ENCODE measurements at regions of chr6 and their contacts with region 1.

Region 1: DNA sequence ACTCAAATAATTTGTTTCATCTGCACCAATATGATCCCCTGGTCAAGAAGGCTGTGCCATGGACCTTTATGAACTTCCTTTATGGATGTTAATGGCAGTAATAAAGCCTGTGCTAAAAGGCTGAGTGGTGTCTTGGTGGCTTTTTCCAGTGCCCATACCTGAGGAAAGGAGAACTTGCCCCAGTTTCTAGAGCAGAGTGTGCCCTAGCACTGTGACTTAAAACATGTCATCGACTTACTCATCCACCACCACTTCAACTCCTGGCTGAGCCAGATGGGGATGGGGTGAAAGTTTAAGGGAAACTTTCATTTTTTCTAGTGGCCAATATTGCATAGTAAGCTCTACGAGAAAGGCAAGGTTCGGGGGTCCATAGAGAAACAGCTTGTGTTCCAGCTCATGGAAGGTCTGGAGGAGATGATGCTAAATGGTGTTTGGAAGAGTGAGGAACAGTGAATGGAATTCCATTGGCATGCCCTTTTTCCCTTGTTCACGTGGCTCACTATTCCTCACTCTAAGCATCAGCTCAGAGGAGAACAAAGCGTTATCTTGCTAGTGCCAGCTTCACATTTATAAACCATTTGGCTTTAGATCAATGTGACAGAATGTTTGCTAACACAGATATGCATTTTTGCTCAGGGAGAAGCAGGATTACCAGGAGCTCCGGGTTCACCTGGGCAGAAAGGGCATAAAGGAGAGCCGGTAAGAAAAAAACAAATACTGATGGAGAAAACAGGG is 71.2 kb downstream of the COL19A1 start:
- DNase-seq: no peak
- H3K4me3 ChIP-seq: no peak overlapping the region
- H3K27ac ChIP-seq: no peak overlapping the region
- H3K4me1 ChIP-seq: no peaks in the 10 kb centered on the region
- H3K27me3 ChIP-seq: no peaks in the 10 kb centered on the region
- CTCF ChIP-seq: no peak
- EP300 ChIP-seq: no peak
- POLR2A ChIP-seq: no peak

Region 2: GRCh38 chr6:69914015-69914485 is 23.5 kb before region 1 on chr6:
- in situ Hi-C with region 1: no loop called
- intact Hi-C with region 1: loop called (anchors 2 kb)
- DNase-seq: no peak
- H3K4me3 ChIP-seq: no peak overlapping the region
- H3K27ac ChIP-seq: no peak overlapping the region
- H3K4me1 ChIP-seq: no peaks in the 10 kb centered on the region
- H3K27me3 ChIP-seq: no peaks in the 10 kb centered on the region
- CTCF ChIP-seq: no peak
- EP300 ChIP-seq: no peak
- POLR2A ChIP-seq: no peak

Measured in transverse colon (tissue), 4 donors.